ENCODE measurements at regions of chr1 and their contacts with region 1.

Region 1: GRCh38 chr1:117398957-117399356 is 31.7 kb downstream of the MAN1A2 start:
- DNase-seq: no peak
- ATAC-seq: no peak
- H3K4me3 Mint-ChIP-seq: no peak overlapping the region
- H3K27ac Mint-ChIP-seq: no peak overlapping the region
- H3K4me1 Mint-ChIP-seq: peaks cover 25% of the 10 kb centered on the region
- H3K27me3 Mint-ChIP-seq: no peaks in the 10 kb centered on the region
- CTCF ChIP-seq: no peak

Region 2: GRCh38 chr1:117388328-117388727 is 10.6 kb before region 1 on chr1:
- CTCF ChIA-PET with region 1: no interaction called
- POLR2A ChIA-PET with region 1: no interaction called
- intact Hi-C with region 1: loop called (anchors 1 kb)
- DNase-seq: no peak
- ATAC-seq: peak; percentile 14
- H3K4me3 Mint-ChIP-seq: no peak overlapping the region
- H3K27ac Mint-ChIP-seq: peak overlapping the region; percentile 46
- H3K4me1 Mint-ChIP-seq: peaks cover 64% of the 10 kb centered on the region
- H3K27me3 Mint-ChIP-seq: no peaks in the 10 kb centered on the region
- CTCF ChIP-seq: no peak

Region 3: DNA sequence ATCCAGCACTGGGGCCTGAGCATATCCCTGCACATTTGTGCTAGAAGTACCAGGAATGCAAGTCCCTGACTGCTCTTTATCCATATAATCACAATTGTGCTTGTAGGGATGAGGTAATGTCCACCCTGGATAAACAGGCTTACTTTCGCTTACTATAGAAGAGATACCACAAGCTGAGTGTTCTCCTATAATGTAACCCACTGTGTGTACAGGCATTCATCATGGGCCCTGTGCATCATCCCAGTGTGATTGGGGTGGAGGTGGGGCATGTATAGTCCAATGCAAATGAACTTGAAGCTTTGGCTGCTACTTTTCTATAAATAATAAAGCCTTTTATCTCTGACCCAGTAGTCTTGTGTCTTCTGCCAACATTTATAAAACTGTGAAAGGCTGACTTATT is 37.6 kb after region 1 on chr1:
- CTCF ChIA-PET with region 1: no interaction called
- POLR2A ChIA-PET with region 1: no interaction called
- intact Hi-C with region 1: loop called (anchors 5 kb)
- DNase-seq: no peak
- ATAC-seq: no peak
- H3K4me3 Mint-ChIP-seq: no peak overlapping the region
- H3K27ac Mint-ChIP-seq: no peak overlapping the region
- H3K4me1 Mint-ChIP-seq: peaks cover 5% of the 10 kb centered on the region
- H3K27me3 Mint-ChIP-seq: no peaks in the 10 kb centered on the region
- CTCF ChIP-seq: no peak